Panc1 (cell line): ENCODE measurements at regions of chr14 and their contacts with region 1.

Region 1: DNA sequence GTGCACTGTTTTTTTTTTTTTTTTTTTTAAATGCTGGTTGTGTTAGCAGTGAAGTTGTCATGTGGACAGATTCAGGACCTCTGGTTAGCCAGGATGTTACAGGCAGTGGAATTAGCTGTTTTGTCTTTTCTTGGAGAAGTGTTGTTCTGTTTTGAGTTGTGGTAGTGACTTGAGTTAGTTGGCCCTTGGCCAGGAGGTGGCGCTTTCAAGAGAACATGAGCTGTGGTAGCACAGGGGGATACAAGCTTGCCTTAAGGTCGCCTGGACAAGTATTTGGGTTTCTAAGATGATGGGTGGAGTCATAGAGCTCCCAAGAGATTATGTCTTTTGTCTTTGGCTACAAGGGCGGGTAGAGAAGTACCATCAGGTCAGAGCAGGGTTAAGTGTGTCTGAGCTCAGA is 33.3 kb upstream of the CCDC198 start:
- DNase-seq: no peak
- ATAC-seq: no peak
- H3K4me3 ChIP-seq: no peak overlapping the region
- H3K27ac ChIP-seq: no peak overlapping the region
- H3K4me1 ChIP-seq: no peaks in the 10 kb centered on the region
- H3K27me3 ChIP-seq: no peaks in the 10 kb centered on the region
- CTCF ChIP-seq: no peak

Region 2: DNA sequence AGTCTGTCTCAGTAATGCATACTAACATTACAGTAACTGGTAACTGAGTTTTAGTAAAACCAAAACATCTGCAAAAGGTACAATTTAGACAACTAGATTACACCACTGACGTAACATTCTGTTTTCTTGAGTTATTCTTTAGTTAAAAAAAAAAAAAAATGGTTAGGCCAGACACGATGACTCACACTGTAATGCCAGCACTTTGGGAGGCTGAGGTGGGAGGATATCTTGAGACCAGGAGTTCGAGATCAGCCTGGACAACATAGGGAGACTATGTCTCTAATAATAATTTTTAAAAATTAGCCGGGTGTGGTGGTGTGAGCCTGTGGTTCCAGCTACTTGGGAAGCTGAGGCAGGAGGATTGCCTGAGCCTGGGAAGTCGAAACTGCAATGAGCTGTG is 224.1 kb before region 1 on chr14:
- CTCF ChIA-PET with region 1: no interaction called
- POLR2A ChIA-PET with region 1: interaction called, 11 read pairs
- in situ Hi-C with region 1: no loop called
- intact Hi-C with region 1: no loop called
- DNase-seq: no peak
- ATAC-seq: no peak
- H3K4me3 ChIP-seq: no peak overlapping the region
- H3K27ac ChIP-seq: no peak overlapping the region
- H3K4me1 ChIP-seq: no peaks in the 10 kb centered on the region
- H3K27me3 ChIP-seq: no peaks in the 10 kb centered on the region
- CTCF ChIP-seq: no peak